Head of caudate nucleus (tissue), 42 donors: ENCODE measurements at regions of chr5 and their contacts with region 1.

Region 1: DNA sequence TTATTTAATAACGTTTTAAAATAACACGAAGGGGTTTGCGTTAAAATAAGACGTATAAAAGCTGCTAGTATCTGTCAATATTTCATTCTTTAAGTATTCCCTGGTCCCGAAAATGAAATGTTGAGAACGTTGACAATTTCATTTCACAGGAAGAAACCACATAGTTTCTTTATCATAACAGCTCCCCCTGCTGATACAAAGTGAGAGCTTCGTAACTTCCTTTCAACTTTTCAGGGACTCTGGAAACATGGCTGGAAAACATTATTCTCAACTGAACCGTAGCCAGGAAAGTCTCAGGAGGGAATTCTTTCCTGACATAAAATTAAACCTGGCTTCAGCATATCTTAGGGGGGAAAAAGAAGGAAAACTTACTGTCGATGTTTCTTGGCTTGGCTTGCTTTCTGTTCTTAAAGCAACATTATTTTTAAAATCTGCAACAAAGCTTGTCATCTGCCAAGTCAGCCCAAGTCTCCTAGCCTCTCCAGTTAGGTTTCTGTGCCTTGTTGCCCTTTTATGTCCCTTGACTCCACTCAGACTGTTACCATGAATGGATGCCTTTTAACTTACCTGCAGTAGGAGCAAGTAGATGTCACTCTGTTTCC is 122.9 kb upstream of the DAB2 start:
- DNase-seq: peak in 17 of 42 donors; percentile 8 to 73 (median 38)

Region 2: GRCh38 chr5:39376293-39376714 is 171.3 kb before region 1 on chr5:
- intact Hi-C with region 1: loop called (anchors 5 kb)
- DNase-seq: peak in 22 of 42 donors; percentile 6 to 77 (median 46)

Region 3: DNA sequence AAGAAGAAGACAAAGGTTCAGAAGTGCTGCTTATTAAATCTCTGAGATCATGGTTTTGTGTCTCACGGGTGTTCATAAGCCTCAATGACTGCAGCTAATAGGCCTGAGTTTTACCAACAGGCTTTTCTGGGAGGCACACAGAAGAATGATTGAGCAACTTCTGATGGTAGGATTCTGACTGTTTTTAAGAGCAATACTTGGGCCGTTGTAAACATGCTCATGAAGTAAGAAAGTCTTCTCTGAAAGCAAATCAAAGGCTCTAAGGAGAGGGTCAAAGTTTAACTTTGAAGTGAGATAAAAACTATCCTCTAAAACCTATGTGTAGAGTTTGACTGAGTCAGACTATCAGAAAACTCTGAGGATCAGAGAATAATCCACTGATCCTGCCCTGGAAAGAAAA is 268.1 kb after region 1 on chr5:
- intact Hi-C with region 1: no loop called
- DNase-seq: no peak